ENCODE measurements at regions of chr19 and their contacts with region 1.

Region 1: GRCh38 chr19:51339687-51340656 is 2.0 kb downstream of the VSIG10L start:
- DNase-seq: peak; percentile 91 to 93 (median 92)
- H3K4me3 ChIP-seq: peak overlapping the region; percentile 39 to 83 (median 74)
- H3K27ac ChIP-seq: peak overlapping the region in 1 of 2 experiments; percentile 43
- H3K4me1 ChIP-seq: peaks cover 0 to 22% (median 21%) of the 10 kb centered on the region in 4 experiments
- H3K27me3 ChIP-seq: peaks cover 0 to 18% (median 4%) of the 10 kb centered on the region in 5 experiments

Region 2: GRCh38 chr19:51296336-51297093 is 43.5 kb before region 1 on chr19:
- CTCF ChIA-PET with region 1: no interaction called
- POLR2A ChIA-PET with region 1: no interaction called
- DNase-seq: peak in 1 of 3 donors; percentile 19
- H3K4me3 ChIP-seq: no peak overlapping the region
- H3K27ac ChIP-seq: no peak overlapping the region
- H3K4me1 ChIP-seq: no peaks in the 10 kb centered on the region
- H3K27me3 ChIP-seq: peaks cover 0 to 4% (median 2%) of the 10 kb centered on the region in 5 experiments

Region 3: DNA sequence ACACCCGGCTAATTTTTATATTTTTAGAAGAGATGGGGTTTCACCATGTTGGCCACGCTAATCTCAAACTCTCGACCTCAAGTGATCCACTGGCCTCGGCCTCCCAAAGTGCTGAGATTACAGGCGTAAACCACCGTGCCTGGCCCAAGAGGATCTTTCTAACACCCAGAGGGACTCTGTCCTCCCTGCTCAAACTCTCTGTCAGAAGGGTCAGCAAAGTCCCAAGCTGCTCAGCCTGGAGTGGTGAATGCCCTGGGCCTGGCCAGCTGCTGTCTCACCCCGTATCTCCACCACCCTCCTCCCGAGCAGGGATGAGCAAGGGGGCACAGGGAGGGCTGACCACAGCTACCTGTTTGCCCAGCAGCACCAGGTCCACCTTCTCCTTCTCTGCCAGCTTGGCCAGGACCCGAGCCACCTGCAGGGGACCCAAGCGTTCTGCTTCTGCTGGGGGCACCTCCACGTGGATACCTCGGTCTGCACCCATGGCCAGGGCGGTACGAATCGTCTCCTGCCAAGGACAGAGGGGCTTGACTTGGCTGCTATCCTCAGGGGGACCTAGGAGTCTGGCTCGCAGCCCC is 12.9 kb after region 1 on chr19:
- CTCF ChIA-PET with region 1: interaction called, 11 read pairs
- POLR2A ChIA-PET with region 1: no interaction called
- DNase-seq: no peak
- H3K4me3 ChIP-seq: no peak overlapping the region
- H3K27ac ChIP-seq: no peak overlapping the region
- H3K4me1 ChIP-seq: no peaks in the 10 kb centered on the region
- H3K27me3 ChIP-seq: no peaks in the 10 kb centered on the region

Measured in common myeloid progenitor, CD34-positive (primary cell).